Posterior vena cava (tissue), 2 donors: ENCODE measurements at regions of chr1 and their contacts with region 1.

Region 1: GRCh38 chr1:224914292-224914900 is 15.1 kb upstream of the DNAH14 start:
- DNase-seq: no peak

Region 2: GRCh38 chr1:224528900-224529299 is 385.5 kb before region 1 on chr1:
- intact Hi-C with region 1: loop called in 1 of 2 experiments (anchors 10 kb)
- DNase-seq: no peak

Region 3: GRCh38 chr1:224856973-224857372 is 57.4 kb before region 1 on chr1:
- intact Hi-C with region 1: loop called in 1 of 2 experiments (anchors 2 kb)
- DNase-seq: no peak

Region 4: GRCh38 chr1:224929335-224930237 is 15.2 kb after region 1 on chr1 and contains the start of gene DNAH14:
- intact Hi-C with region 1: no loop called
- DNase-seq: peak; percentile 92
- total RNA-seq, gene DNAH14: 3.1 to 4.0 TPM